ENCODE measurements at regions of chr18 and their contacts with region 1.

Region 1: DNA sequence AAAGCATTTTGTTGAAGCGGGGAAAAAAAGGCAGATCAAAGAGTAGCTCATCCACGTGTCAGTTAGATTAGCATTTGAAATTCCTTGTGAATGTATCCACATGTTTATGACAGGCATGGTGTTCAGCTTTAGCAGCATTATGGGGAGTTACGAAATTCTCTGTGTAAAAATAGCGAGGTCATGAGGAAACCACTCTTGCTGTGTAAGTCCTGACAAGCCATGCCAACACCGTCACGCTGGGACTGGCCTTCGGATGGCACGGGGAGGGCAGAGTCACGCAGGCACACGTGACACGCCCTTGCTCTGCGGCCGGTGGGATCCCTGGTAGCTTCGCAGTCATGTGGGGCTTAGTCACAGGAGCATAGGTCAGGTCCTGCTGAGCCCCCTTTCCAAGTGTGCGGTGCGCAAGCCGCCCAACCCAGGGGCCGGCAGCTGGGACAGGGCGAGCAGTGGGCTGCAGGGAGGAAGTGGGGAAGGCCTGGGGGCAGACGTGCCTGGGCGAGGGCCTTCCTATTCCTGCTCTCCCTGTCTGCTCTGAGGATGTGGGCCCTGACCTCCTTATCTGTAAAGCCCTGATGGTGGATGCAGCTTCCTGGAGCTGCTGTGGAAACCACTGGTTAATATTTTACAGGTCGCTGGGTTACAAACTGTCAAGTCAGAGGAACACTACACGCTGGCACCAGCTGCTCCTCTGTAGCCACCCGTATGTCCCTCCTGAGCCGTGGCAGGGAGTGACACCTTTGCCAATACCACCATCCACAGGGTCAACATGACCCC is 18.0 kb downstream of the MBP start:
- DNase-seq: peak; percentile 89 to 95 (median 91)
- ATAC-seq: peak; percentile 94 to 97 (median 96)
- H3K4me3 ChIP-seq: peak overlapping the region in 2 of 12 donors; percentile 17 to 44
- H3K27ac ChIP-seq: peak overlapping the region; percentile 78 to 97 (median 90)
- H3K4me1 ChIP-seq: peaks cover 0 to 76% (median 24%) of the 10 kb centered on the region in 12 donors
- H3K27me3 ChIP-seq: no peaks in the 10 kb centered on the region
- CTCF ChIP-seq: no peak
- POLR2A ChIP-seq: no peak

Region 2: GRCh38 chr18:76981396-76981968 is 133.1 kb before region 1 on chr18:
- intact Hi-C with region 1: no loop called
- DNase-seq: peak in 1 of 5 donors; percentile 4
- ATAC-seq: no peak
- H3K4me3 ChIP-seq: no peak overlapping the region
- H3K27ac ChIP-seq: no peak overlapping the region
- H3K4me1 ChIP-seq: peaks cover 0 to 15% (median 4%) of the 10 kb centered on the region in 12 donors
- H3K27me3 ChIP-seq: no peaks in the 10 kb centered on the region
- CTCF ChIP-seq: no peak
- POLR2A ChIP-seq: no peak

Region 3: DNA sequence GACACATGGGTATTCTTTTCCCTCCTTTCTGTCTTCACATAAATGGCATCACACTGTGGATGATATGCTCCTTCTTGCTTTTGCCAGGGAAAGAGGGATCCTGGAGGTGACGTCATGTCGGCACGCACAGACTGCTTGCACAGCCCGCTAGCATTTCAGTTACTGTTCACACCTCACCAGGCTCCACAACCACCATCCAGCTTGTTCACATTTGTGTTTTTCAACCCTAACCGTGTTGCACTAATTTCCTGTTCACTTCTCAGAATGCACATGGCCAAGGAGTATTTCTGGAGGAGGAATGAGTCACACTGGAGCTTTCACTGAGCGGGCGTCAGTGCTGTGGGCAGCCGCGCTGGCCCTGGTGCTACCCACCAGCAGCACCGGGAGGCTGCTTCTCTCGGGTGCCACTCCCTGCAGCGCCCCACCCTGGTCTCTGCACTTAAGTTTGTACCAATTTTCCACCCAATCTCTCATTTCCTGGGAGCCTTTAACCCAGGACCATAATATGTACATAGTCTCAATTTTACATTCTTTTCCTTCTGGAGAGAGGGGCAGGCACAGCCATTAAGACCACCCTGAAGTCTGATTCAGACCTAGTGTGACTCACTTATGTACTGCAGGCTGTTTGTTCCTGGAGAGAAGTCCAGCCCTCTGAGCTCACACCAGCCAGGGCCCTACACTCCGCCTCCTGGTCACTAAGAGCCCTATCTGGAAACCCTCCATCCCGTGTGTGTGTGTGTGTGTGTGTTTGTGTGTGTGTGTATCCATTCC is 47.1 kb before region 1 on chr18:
- intact Hi-C with region 1: loop called in 1 of 10 experiments (anchors 5 kb)
- DNase-seq: peak in 3 of 5 donors; percentile 61 to 84 (median 77)
- ATAC-seq: peak; percentile 63 to 83 (median 74)
- H3K4me3 ChIP-seq: peak overlapping the region in 2 of 12 donors; percentile 7 to 17
- H3K27ac ChIP-seq: peak overlapping the region; percentile 33 to 88 (median 72)
- H3K4me1 ChIP-seq: peaks cover 0 to 97% (median 45%) of the 10 kb centered on the region in 12 donors
- H3K27me3 ChIP-seq: no peaks in the 10 kb centered on the region
- CTCF ChIP-seq: peak in 1 of 12 donors; percentile 7
- POLR2A ChIP-seq: no peak

Region 4: GRCh38 chr18:77079954-77080682 is 34.5 kb before region 1 on chr18:
- intact Hi-C with region 1: no loop called
- DNase-seq: peak in 1 of 5 donors; percentile 58
- ATAC-seq: peak in 3 of 4 donors; percentile 40 to 47 (median 42)
- H3K4me3 ChIP-seq: no peak overlapping the region
- H3K27ac ChIP-seq: peak overlapping the region in 7 of 12 donors; percentile 2 to 79 (median 41)
- H3K4me1 ChIP-seq: peaks cover 0 to 69% (median 34%) of the 10 kb centered on the region in 12 donors
- H3K27me3 ChIP-seq: no peaks in the 10 kb centered on the region
- CTCF ChIP-seq: no peak
- POLR2A ChIP-seq: no peak